ENCODE measurements at regions of chr3 and their contacts with region 1.

Region 1: GRCh38 chr3:112013058-112013783 is 14.5 kb downstream of the TAGLN3 start:
- DNase-seq: peak; percentile 23
- H3K4me3 ChIP-seq: no peak overlapping the region
- CTCF ChIP-seq: peak; percentile 70

Region 2: GRCh38 chr3:111668912-111669488 is 344.2 kb before region 1 on chr3:
- CTCF ChIA-PET with region 1: interaction called, 52 read pairs
- POLR2A ChIA-PET with region 1: no interaction called
- DNase-seq: no peak
- H3K4me3 ChIP-seq: no peak overlapping the region
- CTCF ChIP-seq: peak; percentile 58

Region 3: GRCh38 chr3:111859974-111860859 is 153.0 kb before region 1 on chr3:
- CTCF ChIA-PET with region 1: interaction called, 20 read pairs
- POLR2A ChIA-PET with region 1: no interaction called
- DNase-seq: no peak
- H3K4me3 ChIP-seq: peak overlapping the region; percentile 81
- CTCF ChIP-seq: peak; percentile 56

Region 4: DNA sequence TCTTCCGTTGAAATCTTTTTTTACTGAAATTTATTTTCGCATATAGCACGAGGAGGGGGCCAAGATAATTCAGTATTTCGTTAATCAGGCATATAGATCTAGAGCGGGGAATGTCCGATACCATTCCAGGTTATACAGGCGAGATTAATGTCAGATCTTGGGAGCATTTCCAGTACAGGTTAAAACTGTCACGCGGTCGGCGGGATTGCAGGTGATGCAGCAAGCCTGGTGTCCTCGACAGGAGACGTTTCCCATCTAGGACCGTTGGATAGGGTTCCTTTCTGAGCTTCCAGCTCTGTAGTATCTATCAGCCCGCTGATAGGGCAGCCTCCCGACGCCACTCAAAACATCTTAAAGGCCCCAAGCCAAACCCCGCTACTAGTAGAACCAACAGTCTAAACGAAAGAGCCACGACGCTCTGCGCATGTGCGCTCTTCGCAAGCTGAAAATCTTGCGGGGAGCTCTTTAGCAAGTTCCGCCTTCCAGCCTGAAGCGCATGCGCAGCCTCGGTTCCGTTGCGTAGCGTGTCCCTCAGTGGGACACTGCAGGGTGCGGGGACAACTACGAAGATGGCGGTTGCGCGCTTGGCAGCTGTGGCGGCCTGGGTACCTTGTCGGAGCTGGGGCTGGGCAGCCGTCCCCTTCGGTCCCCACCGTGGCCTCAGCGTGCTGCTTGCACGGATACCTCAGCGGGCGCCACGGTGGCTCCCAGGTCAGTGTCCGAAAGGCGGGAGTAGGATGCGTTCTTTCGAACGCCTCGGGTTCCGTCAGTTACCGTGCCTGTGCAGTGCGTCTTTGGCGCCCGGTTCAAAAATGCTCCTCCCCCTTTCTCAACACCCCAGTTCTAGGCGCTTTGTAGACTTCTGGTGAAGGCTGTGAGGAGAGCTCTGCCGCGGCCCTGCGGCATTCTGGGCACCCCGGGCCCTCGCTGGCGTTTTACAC is 34.5 kb before region 1 on chr3 and contains the start of gene ABHD10:
- CTCF ChIA-PET with region 1: interaction called, 21 read pairs
- POLR2A ChIA-PET with region 1: no interaction called
- DNase-seq: peak; percentile 84
- H3K4me3 ChIP-seq: peak within 1 kb of the TSS; percentile 89
- CTCF ChIP-seq: no peak

Region 5: DNA sequence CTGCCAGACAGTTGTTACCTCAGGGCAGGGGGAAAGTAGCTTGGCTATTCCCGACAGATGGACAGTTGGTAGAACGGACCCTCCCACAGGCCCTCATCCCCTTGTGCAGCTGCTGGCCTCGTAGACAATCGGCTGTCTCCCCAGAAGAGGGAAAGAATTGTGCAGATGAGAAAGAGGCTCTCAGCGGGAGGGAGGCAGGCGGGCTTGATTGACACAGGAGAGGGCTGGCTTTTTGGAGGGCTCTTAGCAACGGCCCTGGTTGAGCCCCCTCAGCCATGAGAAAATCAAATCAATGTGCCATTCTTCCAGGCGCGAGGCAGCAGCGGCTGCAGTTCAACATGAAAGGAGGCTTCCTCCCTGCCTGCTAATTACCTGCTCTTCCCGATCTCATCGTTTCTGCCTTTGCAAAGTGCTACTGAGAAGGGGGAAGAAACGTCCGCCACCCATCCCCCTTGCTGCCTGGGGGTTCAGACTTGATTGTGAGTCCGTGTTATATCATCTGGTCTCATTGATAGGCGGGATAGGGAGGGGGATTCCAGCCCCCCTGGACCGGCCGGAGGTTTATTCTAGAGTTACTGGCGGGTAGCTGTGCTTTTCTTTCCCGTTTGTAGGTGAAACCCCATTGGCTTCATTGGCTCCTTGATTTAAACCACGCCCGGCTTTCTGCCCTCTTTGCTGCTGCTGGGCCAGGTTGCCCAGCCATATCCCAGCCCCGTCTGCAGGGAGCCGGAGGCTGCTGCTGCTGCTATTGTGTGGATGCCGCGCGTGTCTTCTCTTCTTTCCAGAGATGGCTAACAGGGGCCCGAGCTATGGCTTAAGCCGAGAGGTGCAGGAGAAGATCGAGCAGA is 14.4 kb before region 1 on chr3 and contains the start of gene TAGLN3:
- CTCF ChIA-PET with region 1: interaction called, 134 read pairs
- POLR2A ChIA-PET with region 1: no interaction called
- DNase-seq: no peak
- H3K4me3 ChIP-seq: peak within 1 kb of the TSS; percentile 47
- CTCF ChIP-seq: no peak

Region 6: DNA sequence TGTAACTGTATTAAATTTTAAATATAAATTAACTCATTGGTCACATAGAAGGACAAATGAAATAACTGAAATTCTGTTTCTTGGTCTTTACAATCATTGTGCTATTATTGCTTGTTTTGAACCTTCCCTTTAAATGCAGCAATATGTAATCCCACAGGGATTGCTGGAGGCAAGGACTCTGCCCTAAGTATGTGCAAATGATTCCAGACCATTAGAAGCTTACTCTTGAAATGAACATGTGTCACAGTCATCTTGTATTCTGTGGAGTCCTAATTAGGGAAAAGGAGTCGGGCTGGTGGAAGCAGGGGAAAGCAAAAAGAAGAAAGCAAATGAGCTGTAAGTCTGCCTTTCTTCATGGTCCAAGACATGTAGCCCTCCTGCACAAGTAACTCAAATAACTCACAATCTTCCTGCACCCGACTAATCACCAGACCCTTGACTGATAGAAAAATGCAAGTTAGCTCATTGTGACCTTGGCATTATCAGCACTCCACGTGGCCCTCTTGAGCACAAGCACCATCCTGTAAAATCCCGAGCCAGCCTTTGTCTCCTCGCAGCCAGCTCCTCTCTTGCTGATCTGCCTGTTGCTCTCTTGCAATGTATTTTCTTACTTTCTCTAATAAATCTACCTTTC is 19.0 kb after region 1 on chr3:
- CTCF ChIA-PET with region 1: interaction called, 42 read pairs
- POLR2A ChIA-PET with region 1: no interaction called
- DNase-seq: no peak
- H3K4me3 ChIP-seq: no peak overlapping the region
- CTCF ChIP-seq: no peak

Region 7: GRCh38 chr3:112048911-112049310 is 35.7 kb after region 1 on chr3:
- CTCF ChIA-PET with region 1: interaction called, 39 read pairs
- POLR2A ChIA-PET with region 1: no interaction called
- DNase-seq: no peak
- H3K4me3 ChIP-seq: no peak overlapping the region
- CTCF ChIP-seq: no peak

Measured in AG04449 (cell line).